ENCODE measurements at regions of chr19 and their contacts with region 1.

Region 1: GRCh38 chr19:34254552-34255432 is at the start of gene GARRE1:
- DNase-seq: no peak
- H3K4me3 ChIP-seq: peak within 1 kb of the TSS; percentile 94 to 100 (median 99)
- H3K27ac ChIP-seq: peak within 1 kb of the TSS; percentile 94 to 98 (median 97)
- H3K4me1 ChIP-seq: peaks cover 31 to 44% (median 41%) of the 10 kb centered on the region in 4 donors
- H3K27me3 ChIP-seq: peaks cover 0 to 3% (median 0%) of the 10 kb centered on the region in 4 donors
- CTCF ChIP-seq: no peak
- EP300 ChIP-seq: no peak
- POLR2A ChIP-seq: no peak
- total RNA-seq, gene GARRE1: 11.2 to 31.0 (median 20.8) TPM

Region 2: DNA sequence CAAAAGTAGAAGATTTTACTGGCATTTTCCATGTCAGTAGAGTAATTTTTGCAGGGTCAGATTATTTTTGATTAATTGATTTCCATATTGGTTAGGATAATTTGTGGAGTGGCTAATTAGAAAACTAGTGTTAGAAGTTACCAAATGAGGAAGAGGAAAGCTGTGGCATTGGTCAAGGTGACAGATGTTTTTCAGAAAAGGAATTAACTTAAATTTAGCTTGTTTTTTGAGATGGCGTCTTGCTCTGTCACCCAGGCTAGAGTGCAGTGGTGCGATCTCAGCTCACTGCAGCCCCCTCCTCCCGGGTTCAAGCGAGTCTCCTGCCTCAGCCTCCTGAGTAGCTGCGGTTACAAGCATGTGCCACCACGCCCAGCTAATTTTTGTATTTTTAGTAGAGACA is 53.7 kb before region 1 on chr19:
- intact Hi-C with region 1: no loop called
- DNase-seq: no peak
- H3K4me3 ChIP-seq: no peak overlapping the region
- H3K27ac ChIP-seq: no peak overlapping the region
- H3K4me1 ChIP-seq: no peaks in the 10 kb centered on the region
- H3K27me3 ChIP-seq: no peaks in the 10 kb centered on the region
- CTCF ChIP-seq: no peak
- EP300 ChIP-seq: no peak
- POLR2A ChIP-seq: no peak

Region 3: DNA sequence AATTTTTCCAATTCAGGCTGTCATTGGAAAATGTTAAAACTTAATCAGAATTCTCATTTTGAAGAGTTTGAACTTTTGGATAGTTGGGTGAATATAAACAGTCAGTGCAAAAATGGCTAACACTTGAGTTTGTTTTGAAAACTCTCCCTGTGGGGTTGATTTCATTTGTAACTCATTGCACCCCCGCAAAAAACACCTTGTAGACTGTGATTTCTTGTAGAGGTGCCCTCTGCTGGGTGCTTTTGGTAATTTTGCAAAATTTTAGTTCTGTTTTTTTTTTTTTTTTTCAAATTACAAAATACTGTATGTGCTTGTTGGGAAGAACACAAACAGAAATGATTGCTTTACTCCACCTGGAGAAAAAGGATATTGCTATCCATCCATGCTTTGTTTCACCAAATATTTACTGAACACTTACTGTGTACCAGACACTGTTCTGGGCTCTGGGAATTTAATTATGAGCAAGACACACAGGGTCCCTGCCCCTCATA is 82.0 kb after region 1 on chr19:
- intact Hi-C with region 1: loop called (anchors 5 kb)
- DNase-seq: no peak
- H3K4me3 ChIP-seq: no peak overlapping the region
- H3K27ac ChIP-seq: no peak overlapping the region
- H3K4me1 ChIP-seq: peaks cover 0 to 8% (median 4%) of the 10 kb centered on the region in 4 donors
- H3K27me3 ChIP-seq: no peaks in the 10 kb centered on the region
- CTCF ChIP-seq: peak; percentile 54 to 67 (median 58)
- EP300 ChIP-seq: no peak
- POLR2A ChIP-seq: no peak

Measured in esophagus muscularis mucosa (tissue), 4 donors.